BJ (cell line): ENCODE measurements at regions of chr5 and their contacts with region 1.

Region 1: GRCh38 chr5:15463231-15463980 is 36.6 kb upstream of the FBXL7 start:
- DNase-seq: no peak
- H3K4me3 ChIP-seq: no peak overlapping the region
- H3K27me3 ChIP-seq: peaks cover 3% of the 10 kb centered on the region
- CTCF ChIP-seq: peak; percentile 65

Region 2: DNA sequence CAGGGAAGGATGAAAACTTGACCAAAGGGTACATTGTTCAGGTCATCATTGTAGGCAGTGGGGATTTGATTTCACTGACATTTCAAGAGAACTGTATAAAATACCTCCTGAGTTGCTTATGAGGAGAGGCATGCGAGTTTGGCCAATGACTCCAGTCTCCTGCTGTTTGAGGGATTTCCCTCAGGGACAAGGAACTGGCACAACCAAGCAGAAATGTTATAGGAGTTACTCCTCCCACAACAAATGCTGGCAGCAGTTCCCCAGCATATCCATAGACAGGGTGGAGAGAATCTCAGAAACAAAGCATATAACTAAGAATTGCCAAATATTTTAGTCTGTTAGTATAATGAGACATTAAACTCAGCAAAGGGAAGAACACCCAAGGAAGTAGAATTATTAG is 10.6 kb before region 1 on chr5:
- CTCF ChIA-PET with region 1: no interaction called
- POLR2A ChIA-PET with region 1: no interaction called
- DNase-seq: no peak
- H3K4me3 ChIP-seq: no peak overlapping the region
- H3K27me3 ChIP-seq: no peaks in the 10 kb centered on the region
- CTCF ChIP-seq: no peak

Region 3: GRCh38 chr5:15538516-15538915 is 75.1 kb after region 1 on chr5:
- CTCF ChIA-PET with region 1: no interaction called
- POLR2A ChIA-PET with region 1: no interaction called
- DNase-seq: no peak
- H3K4me3 ChIP-seq: no peak overlapping the region
- H3K27me3 ChIP-seq: no peaks in the 10 kb centered on the region
- CTCF ChIP-seq: no peak

Region 4: DNA sequence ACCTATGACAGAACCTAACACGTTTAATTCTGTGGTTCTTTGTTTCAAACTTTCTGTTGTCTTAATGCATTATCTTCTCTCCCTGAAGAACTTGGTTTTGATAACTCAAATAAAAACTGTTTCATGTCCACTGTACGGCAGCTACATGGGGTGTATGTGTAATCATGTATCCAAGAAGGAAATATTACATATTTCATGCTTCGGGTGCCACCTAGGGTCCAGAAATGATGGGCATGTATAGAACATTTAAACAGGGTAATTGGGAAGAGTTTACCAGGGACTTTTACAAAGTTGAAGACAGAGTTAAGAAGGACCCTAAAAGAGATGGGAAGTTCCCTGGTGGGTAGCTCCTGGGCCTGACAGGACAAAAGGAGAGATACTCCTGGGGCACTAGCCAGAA is 327.9 kb after region 1 on chr5:
- CTCF ChIA-PET with region 1: interaction called, 10 read pairs
- POLR2A ChIA-PET with region 1: no interaction called
- DNase-seq: no peak
- H3K4me3 ChIP-seq: no peak overlapping the region
- H3K27me3 ChIP-seq: no peaks in the 10 kb centered on the region
- CTCF ChIP-seq: no peak